Heart right ventricle (tissue), 16 donors: ENCODE measurements at regions of chr20 and their contacts with region 1.

Region 1: GRCh38 chr20:4014031-4014474 is 1.3 kb downstream of the RNF24 start:
- DNase-seq: peak in 1 of 2 donors; percentile 52
- ATAC-seq: peak in 7 of 8 donors; percentile 21 to 68 (median 57)
- H3K4me3 ChIP-seq: peak overlapping the region in 6 of 10 donors; percentile 82 to 94 (median 88)
- H3K27ac ChIP-seq: peak overlapping the region in 4 of 10 donors; percentile 10 to 94 (median 36)
- H3K4me1 ChIP-seq: peaks cover 0 to 75% (median 13%) of the 10 kb centered on the region in 9 donors
- H3K27me3 ChIP-seq: no peaks in the 10 kb centered on the region
- CTCF ChIP-seq: peak; percentile 17 to 76 (median 58)

Region 2: GRCh38 chr20:3795511-3796468 is 218.3 kb before region 1 on chr20 and contains the start of gene CDC25B:
- intact Hi-C with region 1: no loop called
- DNase-seq: peak; percentile 93
- ATAC-seq: peak; percentile 90 to 96 (median 96)
- H3K4me3 ChIP-seq: peak within 1 kb of the TSS; percentile 47 to 92 (median 70)
- H3K27ac ChIP-seq: peak within 1 kb of the TSS; percentile 89 to 98 (median 96)
- H3K4me1 ChIP-seq: peaks cover 0 to 54% (median 20%) of the 10 kb centered on the region in 9 donors
- H3K27me3 ChIP-seq: no peaks in the 10 kb centered on the region
- CTCF ChIP-seq: peak in 6 of 9 donors; percentile 19 to 44 (median 40)
- total RNA-seq, gene CDC25B: 2.8 to 17.3 (median 5.0) TPM

Region 3: DNA sequence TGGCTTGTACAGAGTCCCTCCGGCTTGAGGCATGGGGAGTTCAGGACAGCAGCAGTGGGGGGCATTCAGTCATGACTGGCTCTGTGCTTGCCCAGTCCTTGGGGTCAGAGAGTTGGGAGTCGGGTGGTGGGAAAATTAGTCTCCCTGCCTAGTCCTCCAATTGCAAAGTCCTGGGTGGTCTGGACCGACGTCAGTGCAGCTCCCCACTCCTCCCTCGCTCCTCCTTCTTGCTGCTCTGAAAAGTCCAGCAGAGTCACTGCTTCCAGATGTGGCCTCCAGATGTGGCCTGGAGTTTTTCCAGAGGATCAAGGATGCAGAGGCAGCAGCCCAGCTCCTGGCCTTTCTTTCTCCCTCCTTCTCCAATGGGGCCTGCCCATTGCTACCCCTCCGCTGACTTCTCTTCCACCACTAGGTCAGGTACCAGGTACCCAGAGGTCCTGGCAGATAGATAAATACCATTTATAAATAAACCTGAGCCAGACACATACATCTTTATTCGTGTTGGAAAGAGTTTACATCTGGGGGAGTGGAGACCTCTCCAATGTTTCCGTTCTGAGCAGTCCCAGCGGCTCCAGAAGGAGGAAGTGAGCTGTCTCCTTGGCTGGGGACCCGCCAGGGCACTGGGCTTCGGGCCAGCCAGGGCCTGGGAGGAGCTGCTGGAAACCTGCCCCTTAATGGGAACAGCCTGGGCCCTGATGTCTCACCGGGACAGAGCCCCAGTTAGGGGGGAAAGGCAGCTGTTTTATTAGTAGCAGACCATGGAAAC is 50.3 kb after region 1 on chr20:
- intact Hi-C with region 1: loop called in 5 of 10 experiments (anchors 1 to 5 kb)
- DNase-seq: peak; percentile 94
- ATAC-seq: peak; percentile 90 to 96 (median 93)
- H3K4me3 ChIP-seq: peak overlapping the region in 1 of 10 donors; percentile 12
- H3K27ac ChIP-seq: peak overlapping the region; percentile 64 to 91 (median 83)
- H3K4me1 ChIP-seq: peaks cover 13 to 95% (median 58%) of the 10 kb centered on the region in 9 donors
- H3K27me3 ChIP-seq: no peaks in the 10 kb centered on the region
- CTCF ChIP-seq: peak in 3 of 9 donors; percentile 18 to 38 (median 19)

Region 4: DNA sequence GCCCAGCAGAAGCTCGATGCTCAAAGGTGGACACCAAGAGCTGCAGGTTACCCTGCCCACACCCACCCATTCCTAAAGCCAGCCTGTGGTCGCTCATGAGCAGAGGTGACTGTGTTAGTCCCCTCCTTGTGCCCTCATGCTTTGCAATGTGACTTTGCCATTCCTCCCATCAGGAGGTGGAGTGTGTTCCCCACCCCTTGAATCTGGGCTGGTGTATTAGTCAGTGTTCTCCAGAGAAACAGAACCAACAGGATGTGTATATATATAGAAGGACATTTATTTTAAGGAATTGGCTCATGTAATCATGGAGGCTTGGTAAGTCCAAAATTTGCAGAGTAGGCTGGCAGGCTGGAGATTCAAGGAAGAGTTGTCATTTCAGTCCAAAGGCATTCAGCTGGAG is 55.7 kb after region 1 on chr20:
- intact Hi-C with region 1: loop called in 9 of 10 experiments (anchors 2 to 5 kb)
- DNase-seq: no peak
- ATAC-seq: peak in 5 of 8 donors; percentile 29 to 69 (median 62)
- H3K4me3 ChIP-seq: no peak overlapping the region
- H3K27ac ChIP-seq: peak overlapping the region in 4 of 10 donors; percentile 4 to 37 (median 20)
- H3K4me1 ChIP-seq: peaks cover 0 to 63% (median 21%) of the 10 kb centered on the region in 9 donors
- H3K27me3 ChIP-seq: no peaks in the 10 kb centered on the region
- CTCF ChIP-seq: no peak

Region 5: DNA sequence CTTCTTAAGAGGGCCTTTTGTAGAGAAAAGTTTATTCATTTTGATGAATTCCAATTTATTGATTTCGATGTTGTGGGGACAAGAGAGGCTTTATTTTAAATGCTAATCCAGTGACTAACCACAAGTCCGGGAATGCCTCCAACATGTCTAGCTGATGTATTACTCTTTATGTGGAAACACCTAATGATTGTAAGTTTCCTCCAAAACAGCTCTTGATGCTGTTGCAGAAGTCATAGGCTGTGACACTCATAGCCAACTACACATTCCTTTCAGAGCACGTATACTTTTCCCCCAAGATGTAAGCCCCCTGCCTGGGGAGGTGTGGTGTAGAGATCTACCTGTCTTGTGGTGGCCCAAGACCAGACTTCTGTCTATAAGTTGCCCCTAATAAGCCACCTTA is 62.6 kb after region 1 on chr20:
- intact Hi-C with region 1: loop called in 5 of 10 experiments (anchors 2 to 5 kb)
- DNase-seq: no peak
- ATAC-seq: no peak
- H3K4me3 ChIP-seq: no peak overlapping the region
- H3K27ac ChIP-seq: no peak overlapping the region
- H3K4me1 ChIP-seq: peaks cover 0 to 19% (median 0%) of the 10 kb centered on the region in 9 donors
- H3K27me3 ChIP-seq: no peaks in the 10 kb centered on the region
- CTCF ChIP-seq: no peak

Region 6: GRCh38 chr20:4082406-4083097 is 68.5 kb after region 1 on chr20:
- intact Hi-C with region 1: loop called in 8 of 10 experiments (anchors 1 to 5 kb)
- DNase-seq: peak; percentile 44 to 55
- ATAC-seq: peak; percentile 33 to 71 (median 46)
- H3K4me3 ChIP-seq: no peak overlapping the region
- H3K27ac ChIP-seq: peak overlapping the region in 5 of 10 donors; percentile 19 to 88 (median 53)
- H3K4me1 ChIP-seq: peaks cover 0 to 53% (median 8%) of the 10 kb centered on the region in 9 donors
- H3K27me3 ChIP-seq: peaks cover 0 to 6% (median 0%) of the 10 kb centered on the region in 7 donors
- CTCF ChIP-seq: no peak

Region 7: GRCh38 chr20:4089756-4090487 is 75.9 kb after region 1 on chr20:
- intact Hi-C with region 1: loop called in 8 of 10 experiments (anchors 1 to 5 kb)
- DNase-seq: no peak
- ATAC-seq: no peak
- H3K4me3 ChIP-seq: no peak overlapping the region
- H3K27ac ChIP-seq: peak overlapping the region in 1 of 10 donors; percentile 73
- H3K4me1 ChIP-seq: peaks cover 0 to 40% (median 8%) of the 10 kb centered on the region in 9 donors
- H3K27me3 ChIP-seq: peaks cover 0 to 6% (median 0%) of the 10 kb centered on the region in 7 donors
- CTCF ChIP-seq: no peak